ENCODE measurements at regions of chr5 and their contacts with region 1.

Region 1: GRCh38 chr5:137498736-137499505 is at the start of gene SPOCK1:
- H3K4me3 Mint-ChIP-seq: no peak within 1 kb of the TSS
- H3K27ac Mint-ChIP-seq: no peak within 1 kb of the TSS
- H3K4me1 Mint-ChIP-seq: no peaks in the 10 kb centered on the region
- H3K27me3 Mint-ChIP-seq: peaks cover 32% of the 10 kb centered on the region

Region 2: GRCh38 chr5:137320056-137321045 is 178.6 kb before region 1 on chr5:
- intact Hi-C with region 1: loop called (anchors 1 kb)
- H3K4me3 Mint-ChIP-seq: no peak overlapping the region
- H3K27ac Mint-ChIP-seq: no peak overlapping the region
- H3K4me1 Mint-ChIP-seq: no peaks in the 10 kb centered on the region
- H3K27me3 Mint-ChIP-seq: peaks cover 23% of the 10 kb centered on the region

Region 3: DNA sequence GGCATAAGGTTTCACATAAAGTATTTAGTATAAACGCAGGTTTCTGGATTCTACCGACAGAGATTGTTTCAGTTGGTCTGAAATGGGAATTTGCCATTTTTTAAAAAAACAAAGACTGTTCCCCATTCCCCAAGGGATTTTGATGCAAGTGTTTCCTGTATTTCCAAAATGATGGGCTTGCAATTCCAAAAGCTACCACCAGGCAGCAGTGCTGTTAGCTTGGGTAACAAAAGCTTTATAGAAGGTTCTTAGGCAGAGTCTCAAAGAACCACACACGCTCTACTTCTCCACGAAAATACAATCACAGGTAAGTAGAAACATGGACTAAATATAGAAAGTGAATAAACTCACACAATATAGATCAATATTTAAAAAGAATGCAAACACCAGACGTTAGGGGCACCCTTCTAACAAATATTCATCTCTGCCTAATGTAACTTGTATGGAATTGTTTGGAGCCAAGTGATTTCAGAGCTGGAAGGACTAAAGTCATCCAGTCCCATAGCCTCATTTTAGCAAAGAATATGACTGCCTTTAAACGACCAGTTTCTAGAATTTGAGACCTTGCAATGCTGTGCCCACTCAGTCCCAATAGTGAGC is 154.1 kb before region 1 on chr5:
- intact Hi-C with region 1: loop called (anchors 5 kb)
- H3K4me3 Mint-ChIP-seq: no peak overlapping the region
- H3K27ac Mint-ChIP-seq: no peak overlapping the region
- H3K4me1 Mint-ChIP-seq: no peaks in the 10 kb centered on the region
- H3K27me3 Mint-ChIP-seq: no peaks in the 10 kb centered on the region

Region 4: GRCh38 chr5:137470111-137470920 is 28.6 kb before region 1 on chr5:
- intact Hi-C with region 1: no loop called
- H3K4me3 Mint-ChIP-seq: no peak overlapping the region
- H3K27ac Mint-ChIP-seq: no peak overlapping the region
- H3K4me1 Mint-ChIP-seq: no peaks in the 10 kb centered on the region
- H3K27me3 Mint-ChIP-seq: peaks cover 6% of the 10 kb centered on the region

Measured in dendritic cell treated with granulocyte-macrophage colony-stimulating factor and Interleukin-4, amounts not matched to agents 40 ng/mL and 50 ng/mL, for 4 days (primary cell).